ENCODE measurements at regions of chr11 and their contacts with region 1.

Region 1: GRCh38 chr11:36564376-36565030 is 3.3 kb upstream of the RAG1 start:
- DNase-seq: peak; percentile 69
- ATAC-seq: peak; percentile 86
- H3K4me3 ChIP-seq: peak overlapping the region; percentile 58
- H3K27ac ChIP-seq: no peak overlapping the region
- H3K4me1 ChIP-seq: no peaks in the 10 kb centered on the region
- H3K27me3 ChIP-seq: peaks cover 61% of the 10 kb centered on the region
- CTCF ChIP-seq: peak; percentile 84

Region 2: GRCh38 chr11:36186340-36187175 is 377.9 kb before region 1 on chr11:
- CTCF ChIA-PET with region 1: no interaction called
- POLR2A ChIA-PET with region 1: no interaction called
- intact Hi-C with region 1: no loop called
- DNase-seq: peak; percentile 10
- ATAC-seq: no peak
- H3K4me3 ChIP-seq: no peak overlapping the region
- H3K27ac ChIP-seq: no peak overlapping the region
- H3K4me1 ChIP-seq: peaks cover 5% of the 10 kb centered on the region; the same call in 1 of the 2 replicates
- H3K27me3 ChIP-seq: no peaks in the 10 kb centered on the region
- CTCF ChIP-seq: no peak

Region 3: DNA sequence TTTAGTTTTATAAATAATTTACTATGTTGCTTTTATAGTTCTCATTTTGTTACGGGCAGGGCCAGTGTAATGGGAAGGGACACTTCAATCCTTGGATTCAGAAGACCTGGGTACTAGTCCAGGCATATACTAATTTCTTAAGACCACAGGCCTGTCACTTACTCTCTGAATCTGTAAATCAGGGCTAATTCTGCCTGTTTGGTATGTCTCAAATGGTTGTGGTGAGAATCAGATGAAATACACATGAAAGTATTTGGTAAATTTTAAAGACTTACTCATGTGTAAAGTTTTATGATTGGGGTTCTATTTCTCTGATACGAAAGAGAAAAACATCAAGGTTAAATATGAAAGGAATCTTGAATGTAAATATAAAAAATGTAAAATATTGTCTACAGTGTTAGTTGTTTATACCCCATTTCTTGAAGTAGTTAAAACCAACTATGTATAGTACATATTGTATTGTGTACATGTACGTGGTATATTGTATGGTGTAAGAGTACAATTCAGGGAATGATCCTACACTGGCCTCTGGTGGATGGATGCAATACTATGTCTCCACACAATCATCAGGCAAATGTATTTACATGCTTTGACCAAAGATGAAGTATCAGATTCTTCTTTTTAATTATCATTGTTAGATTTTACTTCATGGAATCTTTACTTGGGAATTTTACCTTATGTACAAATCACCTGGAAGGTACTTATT is 58.1 kb after region 1 on chr11:
- CTCF ChIA-PET with region 1: interaction called, 5 read pairs
- POLR2A ChIA-PET with region 1: no interaction called
- intact Hi-C with region 1: loop called (anchors 1 kb)
- DNase-seq: peak; percentile 48
- ATAC-seq: peak; percentile 97
- H3K4me3 ChIP-seq: no peak overlapping the region
- H3K27ac ChIP-seq: no peak overlapping the region
- H3K4me1 ChIP-seq: no peaks in the 10 kb centered on the region
- H3K27me3 ChIP-seq: no peaks in the 10 kb centered on the region
- CTCF ChIP-seq: peak; percentile 68

Region 4: DNA sequence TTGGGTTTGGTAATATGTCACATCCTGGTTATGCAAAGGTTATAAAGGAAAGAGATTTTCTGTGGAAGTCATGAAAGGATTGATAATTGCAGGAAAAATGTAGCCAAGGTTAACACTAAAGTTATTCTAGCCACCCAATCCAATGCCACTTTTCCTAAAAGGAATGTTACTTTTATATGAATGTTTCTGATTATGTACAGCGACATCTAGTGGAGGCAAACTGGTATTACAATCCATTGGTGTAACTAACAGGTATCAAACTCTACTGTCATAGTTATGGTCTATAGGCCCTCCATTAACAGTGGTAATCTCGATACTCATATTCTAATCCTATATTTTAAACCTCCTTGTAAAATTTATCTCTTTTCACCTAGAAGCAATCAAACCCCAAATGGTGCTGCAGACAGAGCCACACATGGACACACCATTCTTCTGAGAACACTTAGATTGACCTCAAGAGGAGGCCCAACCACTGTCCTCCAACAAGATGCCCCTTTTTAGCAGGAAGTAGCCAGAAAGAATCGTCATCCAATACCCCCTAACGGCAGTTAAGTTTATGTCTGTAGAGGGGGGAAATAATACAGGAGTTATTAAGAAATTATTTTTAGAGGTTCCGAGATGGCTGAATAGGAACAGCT is 108.4 kb after region 1 on chr11:
- CTCF ChIA-PET with region 1: no interaction called
- POLR2A ChIA-PET with region 1: no interaction called
- intact Hi-C with region 1: loop called (anchors 1 kb)
- DNase-seq: peak; percentile 65
- ATAC-seq: peak; percentile 31
- H3K4me3 ChIP-seq: no peak overlapping the region
- H3K27ac ChIP-seq: no peak overlapping the region
- H3K4me1 ChIP-seq: no peaks in the 10 kb centered on the region
- H3K27me3 ChIP-seq: no peaks in the 10 kb centered on the region
- CTCF ChIP-seq: peak; percentile 80

Region 5: GRCh38 chr11:36746886-36747710 is 182.6 kb after region 1 on chr11:
- CTCF ChIA-PET with region 1: interaction called, 9 read pairs
- POLR2A ChIA-PET with region 1: no interaction called
- intact Hi-C with region 1: loop called (anchors 1 kb)
- DNase-seq: peak; percentile 91
- ATAC-seq: peak; percentile 98
- H3K4me3 ChIP-seq: no peak overlapping the region
- H3K27ac ChIP-seq: no peak overlapping the region
- H3K4me1 ChIP-seq: no peaks in the 10 kb centered on the region
- H3K27me3 ChIP-seq: peaks cover 31% of the 10 kb centered on the region
- CTCF ChIP-seq: peak; percentile 96